ENCODE measurements at regions of chr1 and their contacts with region 1.

Region 1: DNA sequence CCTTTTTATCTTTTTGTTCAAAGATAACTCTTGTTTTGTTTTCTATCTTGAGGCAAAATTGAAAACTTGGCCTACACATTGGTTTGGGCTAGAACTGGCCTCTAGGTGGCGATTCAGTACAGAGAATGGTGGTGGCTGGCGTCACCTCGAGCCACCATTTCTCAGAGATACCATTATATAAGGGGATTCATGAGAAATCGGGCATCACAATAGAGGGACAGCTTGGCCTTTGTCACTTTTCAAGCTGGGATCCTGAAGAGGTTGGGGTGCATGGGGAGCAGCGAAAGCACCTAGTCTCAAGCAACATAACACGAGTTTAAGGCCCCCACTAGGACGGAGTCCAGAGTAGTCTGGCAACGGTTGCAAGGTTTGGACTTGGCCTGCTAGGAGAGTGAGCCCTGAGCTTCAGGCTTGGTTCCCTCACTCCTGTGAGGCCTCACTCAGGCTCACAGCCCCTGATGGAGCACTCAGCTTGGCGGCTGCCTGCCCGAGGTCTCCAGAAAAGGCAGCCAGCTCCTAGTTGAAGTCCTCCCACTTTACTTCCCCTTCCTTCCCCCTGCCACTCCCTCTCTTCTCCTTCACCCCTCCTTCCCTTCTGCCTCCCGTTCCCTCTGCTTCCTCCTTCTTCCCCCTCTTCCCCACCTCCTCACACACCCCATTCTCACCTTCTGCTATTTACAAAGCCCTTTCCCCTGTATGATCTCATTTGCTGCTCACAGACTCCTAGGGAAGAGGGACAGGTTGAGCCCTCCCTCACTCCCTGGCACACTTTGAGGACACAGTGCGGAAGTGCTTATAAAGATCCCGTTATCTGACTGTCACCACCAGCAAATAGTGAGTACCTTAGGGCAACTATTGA is 67.8 kb downstream of the LRIG2 start:
- DNase-seq: peak; percentile 48 to 83 (median 69)
- ATAC-seq: peak; percentile 85 to 89
- H3K4me3 ChIP-seq: no peak overlapping the region
- H3K27ac ChIP-seq: peak overlapping the region; percentile 31
- H3K4me1 ChIP-seq: peaks cover 11% of the 10 kb centered on the region
- H3K27me3 ChIP-seq: no peaks in the 10 kb centered on the region

Region 2: GRCh38 chr1:113452921-113453770 is 312.3 kb after region 1 on chr1:
- intact Hi-C with region 1: loop called in 1 of 4 experiments (anchors 10 kb)
- DNase-seq: no peak
- ATAC-seq: peak; percentile 58 to 81
- H3K4me3 ChIP-seq: no peak overlapping the region
- H3K27ac ChIP-seq: no peak overlapping the region
- H3K4me1 ChIP-seq: no peaks in the 10 kb centered on the region
- H3K27me3 ChIP-seq: no peaks in the 10 kb centered on the region

Region 3: DNA sequence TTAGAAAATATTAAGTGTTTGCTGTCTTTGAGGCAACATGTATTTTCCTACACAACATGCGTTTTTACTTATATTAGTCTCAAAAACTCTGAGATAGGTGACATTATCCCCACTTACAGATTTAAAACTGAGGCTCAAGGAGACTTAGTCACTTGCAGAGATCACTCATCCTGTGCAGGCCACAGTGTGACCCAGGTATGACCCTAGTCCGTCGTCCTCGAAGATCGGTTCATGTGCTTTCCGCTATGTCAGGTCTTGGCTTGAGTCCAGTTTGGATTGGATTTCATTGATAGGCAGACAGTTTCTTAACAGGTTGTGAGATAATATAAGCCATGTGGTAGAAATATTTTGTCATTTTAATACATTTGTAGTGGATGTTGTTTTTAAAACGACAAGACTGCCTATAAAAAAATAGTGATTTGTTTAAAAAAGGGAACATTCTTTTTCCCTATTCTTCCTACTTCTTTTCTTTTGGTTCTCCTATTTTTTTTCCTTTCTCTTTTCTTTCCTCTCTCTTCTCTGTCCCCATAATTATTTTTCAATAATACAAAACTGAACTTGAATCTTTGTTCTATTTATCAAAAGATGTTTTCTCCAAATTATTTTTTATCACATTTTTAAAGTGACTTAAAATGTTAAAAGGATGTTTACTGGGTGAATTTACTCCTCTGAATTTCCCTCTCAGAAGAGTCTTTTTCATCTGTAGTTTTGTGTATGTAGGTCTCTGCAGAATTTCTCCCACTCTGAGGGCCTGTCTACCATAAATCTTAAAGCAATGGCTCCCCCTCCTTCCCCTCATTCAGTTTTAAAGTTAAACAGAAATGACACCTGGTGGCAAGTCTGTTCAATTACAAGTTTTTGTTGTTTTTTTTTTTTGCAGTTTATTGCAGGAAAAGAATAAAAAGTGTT is 536.7 kb after region 1 on chr1:
- intact Hi-C with region 1: loop called (anchors 5 kb)
- DNase-seq: peak in 1 of 3 donors; percentile 26
- ATAC-seq: peak; percentile 38 to 84
- H3K4me3 ChIP-seq: no peak overlapping the region
- H3K27ac ChIP-seq: no peak overlapping the region
- H3K4me1 ChIP-seq: no peaks in the 10 kb centered on the region
- H3K27me3 ChIP-seq: no peaks in the 10 kb centered on the region

Measured in right cardiac atrium (tissue), 5 donors.